BJ (cell line): ENCODE measurements at regions of chr1 and their contacts with region 1.

Region 1: DNA sequence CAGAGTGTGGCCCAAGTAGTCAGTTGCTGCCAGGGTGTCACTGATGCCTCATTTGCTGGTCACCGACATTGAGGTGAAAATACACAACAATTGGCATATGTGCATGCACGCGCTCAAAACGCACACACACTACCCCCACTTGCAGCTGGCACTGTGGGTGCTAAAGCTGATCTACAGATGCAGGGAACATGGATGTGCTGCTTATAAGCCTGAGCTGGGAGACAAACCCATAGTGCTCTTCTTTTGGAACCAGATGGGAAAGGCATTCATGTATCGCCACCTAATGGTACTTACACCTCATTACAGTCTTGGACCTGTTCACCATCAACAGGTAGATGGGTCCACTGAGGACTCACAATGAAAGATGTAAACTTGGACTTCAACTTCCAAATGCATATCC is 70.3 kb upstream of the CAMK1G start:
- DNase-seq: no peak
- H3K4me3 ChIP-seq: no peak overlapping the region
- H3K27me3 ChIP-seq: peaks cover 4% of the 10 kb centered on the region
- CTCF ChIP-seq: peak; percentile 65

Region 2: DNA sequence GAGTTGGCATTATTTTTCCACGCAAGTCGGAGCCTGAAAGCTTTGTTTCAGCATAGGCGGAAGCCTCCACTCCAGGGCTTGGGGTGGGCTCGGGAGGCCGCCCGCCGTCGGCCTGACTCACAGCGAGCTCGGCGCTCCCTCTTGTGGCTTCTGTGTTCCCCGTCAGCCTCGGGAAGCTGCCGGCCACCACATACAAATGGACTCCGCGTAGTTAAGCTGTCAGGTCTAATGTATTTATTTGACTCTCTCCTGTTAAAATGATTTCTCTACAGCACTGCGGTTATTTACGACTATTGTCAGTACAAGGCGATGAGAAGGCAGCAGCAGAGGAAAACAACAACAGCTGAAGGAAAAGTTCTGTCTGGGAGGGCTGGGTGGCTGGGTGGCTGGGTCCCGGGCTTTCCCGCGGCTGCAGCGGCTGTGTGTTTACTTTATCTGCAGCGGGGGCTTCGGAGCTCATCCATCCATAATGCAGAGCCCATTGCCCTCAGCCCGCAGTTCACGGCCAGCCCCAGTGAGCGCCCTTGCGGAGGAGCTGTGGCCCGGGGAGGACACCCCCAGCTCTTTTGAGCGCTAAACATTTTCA is 305.4 kb before region 1 on chr1:
- CTCF ChIA-PET with region 1: interaction called, 10 read pairs
- POLR2A ChIA-PET with region 1: no interaction called
- DNase-seq: no peak
- H3K4me3 ChIP-seq: 0 out of 2 replicates have a peak overlapping the region, but pooled peaks have one; percentile 14
- H3K27me3 ChIP-seq: peaks cover 22% of the 10 kb centered on the region
- CTCF ChIP-seq: peak; percentile 92

Region 3: DNA sequence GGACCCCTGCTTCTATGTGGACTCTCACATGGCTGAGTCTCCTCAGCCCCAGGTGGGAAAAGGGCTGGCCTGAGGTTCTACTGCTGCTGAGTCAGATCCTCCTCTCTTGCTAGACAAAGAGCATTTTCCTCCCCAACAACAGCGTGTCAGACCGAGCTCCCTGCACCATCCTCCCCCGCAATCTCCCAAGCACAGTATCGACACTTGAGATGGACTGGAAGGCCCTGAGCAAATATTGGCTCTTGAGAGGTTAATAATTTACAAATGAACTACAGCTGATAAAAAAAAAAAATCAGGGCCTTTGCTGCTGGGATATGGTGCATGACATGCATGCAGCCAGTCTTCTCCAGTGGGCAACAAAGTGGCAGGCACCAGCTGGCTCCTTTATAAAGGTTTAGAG is 14.8 kb after region 1 on chr1:
- CTCF ChIA-PET with region 1: interaction called, 19 read pairs
- POLR2A ChIA-PET with region 1: no interaction called
- DNase-seq: no peak
- H3K4me3 ChIP-seq: no peak overlapping the region
- H3K27me3 ChIP-seq: peaks cover 2% of the 10 kb centered on the region; the same call in 1 of the 2 replicates
- CTCF ChIP-seq: no peak